Posterior cingulate gyrus (tissue), 11 donors: ENCODE measurements at regions of chr2 and their contacts with region 1.

Region 1: DNA sequence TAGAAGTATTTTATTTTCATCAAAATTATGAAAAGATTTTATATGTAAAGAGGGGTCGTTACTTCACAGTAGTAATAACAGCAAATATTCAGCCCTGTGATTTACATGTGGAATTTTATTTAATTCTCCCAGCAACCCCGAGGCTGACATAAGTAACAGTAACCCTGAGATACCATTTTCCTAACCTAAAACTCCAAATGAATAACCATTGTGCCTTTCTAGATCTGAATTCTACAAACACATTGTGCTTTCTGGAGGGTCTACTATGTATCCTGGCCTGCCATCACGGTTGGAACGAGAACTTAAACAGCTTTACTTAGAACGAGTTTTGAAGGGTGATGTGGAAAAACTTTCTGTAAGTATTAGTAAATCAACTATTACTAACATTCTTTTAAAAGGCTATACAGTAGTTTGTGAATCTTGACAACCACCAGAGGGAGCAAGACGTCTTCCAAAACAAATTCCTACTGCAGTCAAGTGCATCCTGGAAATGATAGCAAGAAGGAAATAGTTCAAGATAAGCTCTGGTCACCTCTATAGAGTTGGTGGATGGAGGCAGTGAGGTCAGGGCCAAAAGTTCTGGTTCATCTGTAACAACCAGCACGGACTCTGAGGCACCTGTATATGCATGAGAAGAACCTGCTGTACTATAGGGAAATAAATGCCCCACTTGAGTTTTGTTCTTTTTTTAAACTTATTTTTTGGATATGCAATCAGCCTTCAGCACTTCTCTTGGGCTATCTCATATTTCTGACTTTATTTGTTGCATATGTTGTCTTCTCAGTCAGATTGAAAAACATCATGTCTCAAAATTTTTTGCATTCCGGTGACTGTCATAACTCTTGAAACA is 37.4 kb downstream of the ACTR2 start:
- DNase-seq: peak in 2 of 10 donors; percentile 10 to 24

Region 2: DNA sequence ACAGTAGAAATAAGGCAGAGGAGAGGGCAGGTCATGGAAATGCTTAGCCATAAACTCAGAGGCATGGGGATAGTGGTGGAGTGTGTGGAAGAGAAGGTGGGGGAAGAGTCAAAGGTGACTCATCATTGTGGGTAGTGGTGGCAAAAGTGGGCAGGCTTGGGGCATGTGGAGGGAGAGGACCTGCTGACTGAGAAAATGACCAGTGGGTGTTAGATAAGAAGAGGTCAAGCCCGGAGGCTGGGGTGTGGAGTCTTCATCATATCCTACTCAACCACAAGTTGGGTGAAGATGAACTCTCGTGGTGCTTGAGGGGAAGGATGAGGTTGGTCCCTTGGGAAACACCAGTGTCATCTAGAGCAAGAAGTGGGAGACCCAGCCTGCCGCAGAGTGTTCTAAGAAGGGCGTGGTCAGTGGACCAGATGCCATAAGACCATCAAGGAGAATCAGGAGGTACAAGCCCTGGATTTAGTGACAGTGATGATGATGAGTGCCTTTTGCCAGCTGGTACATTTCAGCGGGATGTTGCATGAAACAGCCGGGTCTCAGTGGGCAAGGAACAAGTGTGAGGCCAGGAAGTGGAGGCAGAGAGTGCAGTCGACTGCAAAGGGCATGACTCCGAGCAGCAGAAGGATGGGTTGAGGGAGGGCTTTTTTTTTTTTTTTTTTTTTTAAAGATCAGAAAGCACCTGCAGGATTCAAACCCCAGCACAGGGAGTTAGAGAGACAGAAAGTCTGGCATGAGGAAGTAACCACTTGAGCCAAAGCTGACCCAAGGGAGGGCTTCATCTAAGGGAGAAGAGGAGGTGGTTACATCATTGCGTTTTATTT is 289.9 kb after region 1 on chr2:
- intact Hi-C with region 1: loop called (anchors 1 kb)
- DNase-seq: peak in 1 of 10 donors; percentile 42

Region 3: DNA sequence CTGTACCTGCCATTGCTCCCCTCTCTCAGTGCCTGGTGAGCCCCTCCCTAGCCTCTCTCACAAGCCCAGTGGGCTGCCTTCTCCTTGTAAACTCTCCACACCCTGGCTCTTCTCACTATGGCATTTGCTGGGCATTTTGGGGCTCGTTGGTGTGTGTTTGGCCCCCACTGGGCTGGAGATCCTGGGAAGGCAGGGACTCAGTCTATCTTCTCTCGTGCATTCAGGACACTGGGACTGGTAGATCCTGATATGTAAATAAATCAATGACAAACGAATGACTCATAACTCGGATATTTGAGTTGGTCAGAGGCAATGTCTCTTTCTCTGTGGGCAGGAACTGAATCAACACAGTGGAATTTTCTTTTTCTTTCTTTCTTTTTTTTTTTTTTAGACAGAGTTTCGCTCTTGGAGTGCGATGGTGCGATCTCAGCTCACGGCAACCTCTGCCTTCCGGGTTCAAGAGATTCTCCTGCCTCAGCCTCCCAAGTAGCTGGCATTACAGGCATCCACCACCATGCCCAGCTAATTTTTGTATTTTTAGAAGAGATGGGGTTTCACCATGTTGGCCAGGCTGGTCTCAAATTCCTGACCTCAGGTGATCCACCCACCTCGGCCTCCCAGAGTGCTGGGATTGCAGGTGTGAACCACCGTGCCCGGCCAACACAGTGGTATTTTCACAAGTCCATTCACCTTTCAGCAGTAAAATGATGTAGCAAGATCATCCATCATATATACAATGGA is 312.0 kb after region 1 on chr2:
- intact Hi-C with region 1: loop called (anchors 2 kb)
- DNase-seq: no peak